Activated B cell treated with CpG ODN at 0.5 μM for 24 hours (primary cell): ENCODE measurements at regions of chr4 and their contacts with region 1.

Region 1: GRCh38 chr4:184815046-184815877 is 10.5 kb downstream of the ACSL1 start:
- DNase-seq: peak; percentile 33
- ATAC-seq: peak; percentile 68
- H3K4me3 Mint-ChIP-seq: peak overlapping the region; percentile 60
- H3K27ac Mint-ChIP-seq: peak overlapping the region; percentile 87
- H3K4me1 Mint-ChIP-seq: peaks cover 81% of the 10 kb centered on the region
- H3K27me3 Mint-ChIP-seq: no peaks in the 10 kb centered on the region
- CTCF ChIP-seq: no peak

Region 2: GRCh38 chr4:184750926-184751584 is 64.2 kb before region 1 on chr4:
- CTCF ChIA-PET with region 1: no interaction called
- POLR2A ChIA-PET with region 1: no interaction called
- intact Hi-C with region 1: no loop called
- DNase-seq: no peak
- ATAC-seq: no peak
- H3K4me3 Mint-ChIP-seq: no peak overlapping the region
- H3K27ac Mint-ChIP-seq: no peak overlapping the region
- H3K4me1 Mint-ChIP-seq: peaks cover 7% of the 10 kb centered on the region
- H3K27me3 Mint-ChIP-seq: no peaks in the 10 kb centered on the region
- CTCF ChIP-seq: no peak

Region 3: GRCh38 chr4:184762100-184762499 is 53.2 kb before region 1 on chr4:
- CTCF ChIA-PET with region 1: no interaction called
- POLR2A ChIA-PET with region 1: no interaction called
- intact Hi-C with region 1: loop called (anchors 10 kb)
- DNase-seq: no peak
- ATAC-seq: peak; percentile 47
- H3K4me3 Mint-ChIP-seq: no peak overlapping the region
- H3K27ac Mint-ChIP-seq: no peak overlapping the region
- H3K4me1 Mint-ChIP-seq: peaks cover 8% of the 10 kb centered on the region
- H3K27me3 Mint-ChIP-seq: no peaks in the 10 kb centered on the region
- CTCF ChIP-seq: no peak

Region 4: GRCh38 chr4:184782731-184783373 is 32.4 kb before region 1 on chr4:
- CTCF ChIA-PET with region 1: no interaction called
- POLR2A ChIA-PET with region 1: no interaction called
- intact Hi-C with region 1: loop called (anchors 2 kb)
- DNase-seq: peak; percentile 25
- ATAC-seq: peak; percentile 72
- H3K4me3 Mint-ChIP-seq: peak overlapping the region; percentile 75
- H3K27ac Mint-ChIP-seq: peak overlapping the region; percentile 86
- H3K4me1 Mint-ChIP-seq: peaks cover 20% of the 10 kb centered on the region
- H3K27me3 Mint-ChIP-seq: no peaks in the 10 kb centered on the region
- CTCF ChIP-seq: no peak

Region 5: DNA sequence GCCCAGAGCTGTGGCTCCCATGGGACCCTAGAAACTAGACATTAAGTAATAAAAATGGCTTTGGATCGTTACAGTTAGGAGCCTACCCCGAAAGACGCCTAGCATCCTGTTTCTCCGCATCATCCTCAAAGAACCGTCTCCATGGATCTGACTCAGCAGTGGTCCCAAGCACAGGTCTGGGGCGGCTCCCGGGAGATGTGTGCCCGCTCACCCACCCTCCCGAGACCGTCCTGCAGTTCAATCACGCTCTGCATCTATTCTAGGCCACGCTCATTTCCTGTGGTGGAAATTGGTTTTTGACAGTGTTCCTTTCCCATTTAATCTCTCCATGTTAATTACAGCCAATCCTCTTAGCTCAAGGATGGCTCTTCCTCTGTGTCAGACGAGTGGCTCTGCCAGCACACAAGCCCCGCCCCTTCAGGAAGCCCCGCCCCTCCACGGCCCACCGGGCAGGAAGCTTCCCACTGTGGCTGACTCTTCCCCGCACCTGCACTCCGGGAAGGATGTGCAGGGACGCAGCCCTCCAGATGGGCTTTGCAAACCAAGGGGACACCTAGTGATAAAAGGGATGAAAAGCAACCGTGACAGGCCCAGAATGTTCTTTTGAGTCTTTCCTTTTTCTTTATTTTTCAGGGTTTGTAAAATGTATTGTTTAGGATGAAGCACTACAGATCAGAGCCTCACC is 168.6 kb after region 1 on chr4:
- CTCF ChIA-PET with region 1: no interaction called
- POLR2A ChIA-PET with region 1: no interaction called
- intact Hi-C with region 1: loop called (anchors 5 kb)
- DNase-seq: peak; percentile 61
- ATAC-seq: peak; percentile 89
- H3K4me3 Mint-ChIP-seq: no peak overlapping the region
- H3K27ac Mint-ChIP-seq: no peak overlapping the region
- H3K4me1 Mint-ChIP-seq: no peaks in the 10 kb centered on the region
- H3K27me3 Mint-ChIP-seq: peaks cover 3% of the 10 kb centered on the region
- CTCF ChIP-seq: no peak